ENCODE measurements at regions of chr2 and their contacts with region 1.

Region 1: GRCh38 chr2:169528271-169528701 is 18.8 kb downstream of the KLHL41 start:
- DNase-seq: peak; percentile 62 to 85
- ATAC-seq: peak; percentile 85 to 96 (median 89)
- H3K4me3 ChIP-seq: no peak overlapping the region
- H3K4me3 Mint-ChIP-seq: no peak overlapping the region
- H3K27ac ChIP-seq: no peak overlapping the region
- H3K27ac Mint-ChIP-seq: no peak overlapping the region
- H3K4me1 ChIP-seq: no peaks in the 10 kb centered on the region
- H3K4me1 Mint-ChIP-seq: no peaks in the 10 kb centered on the region
- H3K27me3 ChIP-seq: no peaks in the 10 kb centered on the region
- H3K27me3 Mint-ChIP-seq: no peaks in the 10 kb centered on the region
- CTCF ChIP-seq: peak; percentile 97

Region 2: GRCh38 chr2:169562519-169562918 is 34.2 kb after region 1 on chr2:
- intact Hi-C with region 1: no loop called
- DNase-seq: no peak
- ATAC-seq: peak in 2 of 3 donors; percentile 40 to 55
- H3K4me3 ChIP-seq: no peak overlapping the region
- H3K4me3 Mint-ChIP-seq: peak overlapping the region; percentile 9
- H3K27ac ChIP-seq: no peak overlapping the region
- H3K27ac Mint-ChIP-seq: peak overlapping the region in 1 of 2 donors; percentile 34
- H3K4me1 ChIP-seq: no peaks in the 10 kb centered on the region
- H3K4me1 Mint-ChIP-seq: no peaks in the 10 kb centered on the region
- H3K27me3 ChIP-seq: no peaks in the 10 kb centered on the region
- H3K27me3 Mint-ChIP-seq: no peaks in the 10 kb centered on the region
- CTCF ChIP-seq: no peak

Region 3: DNA sequence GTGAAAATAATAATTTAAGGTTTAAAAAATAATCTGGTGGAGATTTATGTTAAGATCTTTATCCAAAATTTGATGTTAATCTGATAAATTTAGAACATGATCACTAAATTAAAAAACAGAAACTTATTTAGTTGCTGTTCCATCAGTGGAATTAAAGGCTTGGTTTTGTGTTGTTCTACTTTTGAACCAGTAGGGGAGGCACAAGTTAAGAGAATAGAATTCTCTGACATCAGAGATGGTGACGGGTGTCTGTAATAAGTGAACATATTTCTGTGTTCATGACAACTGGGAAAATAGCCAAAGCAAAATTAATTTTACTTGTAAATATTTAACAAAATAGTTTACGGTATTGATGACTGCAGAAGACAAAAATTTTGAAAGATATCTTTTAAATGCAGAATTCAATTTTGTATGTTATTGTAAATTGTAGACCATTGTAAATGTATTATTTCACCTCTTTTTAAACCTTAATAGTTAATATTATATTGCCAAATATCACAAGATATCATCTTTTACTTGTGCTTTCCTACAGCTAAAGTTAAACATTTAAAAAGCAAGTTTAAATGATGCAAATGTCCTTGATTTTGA is 404.9 kb after region 1 on chr2:
- intact Hi-C with region 1: loop called (anchors 1 kb)
- DNase-seq: peak in 1 of 2 donors; percentile 43
- ATAC-seq: peak in 2 of 3 donors; percentile 56 to 73
- H3K4me3 ChIP-seq: no peak overlapping the region
- H3K4me3 Mint-ChIP-seq: no peak overlapping the region
- H3K27ac ChIP-seq: no peak overlapping the region
- H3K27ac Mint-ChIP-seq: no peak overlapping the region
- H3K4me1 ChIP-seq: no peaks in the 10 kb centered on the region
- H3K4me1 Mint-ChIP-seq: no peaks in the 10 kb centered on the region
- H3K27me3 ChIP-seq: no peaks in the 10 kb centered on the region
- H3K27me3 Mint-ChIP-seq: no peaks in the 10 kb centered on the region
- CTCF ChIP-seq: peak; percentile 66